ENCODE measurements at regions of chr4 and their contacts with region 1.

Region 1: GRCh38 chr4:18069810-18070209 is 48.3 kb upstream of the LCORL start:
- DNase-seq: peak; percentile 56
- H3K4me3 ChIP-seq: no peak overlapping the region
- H3K27ac ChIP-seq: no peak overlapping the region
- H3K4me1 ChIP-seq: no peaks in the 10 kb centered on the region
- H3K27me3 ChIP-seq: no peaks in the 10 kb centered on the region
- CTCF ChIP-seq: no peak
- POLR2A ChIP-seq: no peak

Region 2: DNA sequence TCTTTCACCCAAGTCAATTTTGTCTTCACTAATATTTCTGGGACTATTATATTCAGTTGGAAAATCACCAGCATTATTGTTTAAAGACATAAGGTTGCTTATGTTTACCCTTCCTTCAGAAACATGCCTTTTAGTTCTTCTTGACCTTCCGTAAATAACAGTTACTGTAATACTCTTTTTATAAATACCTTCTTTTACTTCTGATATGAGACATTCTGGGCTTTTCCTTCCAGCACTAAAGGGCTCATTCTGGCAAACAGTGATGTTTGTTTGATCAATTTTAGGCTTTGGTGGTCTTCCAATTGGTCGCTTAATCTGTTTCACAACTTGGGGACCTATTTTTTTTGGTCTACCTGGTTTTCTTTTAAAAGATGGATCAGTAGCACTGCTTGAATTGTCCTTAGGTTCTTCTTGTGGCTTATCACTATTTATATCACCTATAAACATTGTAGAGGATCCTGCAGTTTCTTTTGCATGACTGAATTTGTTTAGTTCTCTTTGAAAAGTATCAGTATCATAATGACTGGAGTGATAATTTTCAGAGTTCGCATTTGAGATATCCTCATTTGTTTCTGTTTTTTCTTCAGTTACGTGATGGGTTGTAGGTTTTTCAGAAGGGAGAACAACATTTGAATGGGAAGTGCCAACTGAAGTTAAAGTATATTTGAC is 194.3 kb before region 1 on chr4:
- CTCF ChIA-PET with region 1: no interaction called
- POLR2A ChIA-PET with region 1: no interaction called
- dilution Hi-C with region 1: no loop called
- intact Hi-C with region 1: loop called (anchors 1 kb)
- DNase-seq: no peak
- H3K4me3 ChIP-seq: no peak overlapping the region
- H3K27ac ChIP-seq: no peak overlapping the region
- H3K4me1 ChIP-seq: no peaks in the 10 kb centered on the region
- H3K27me3 ChIP-seq: no peaks in the 10 kb centered on the region
- CTCF ChIP-seq: no peak
- POLR2A ChIP-seq: no peak